Vagina (tissue), 2 donors: ENCODE measurements at regions of chr3 and their contacts with region 1.

Region 1: DNA sequence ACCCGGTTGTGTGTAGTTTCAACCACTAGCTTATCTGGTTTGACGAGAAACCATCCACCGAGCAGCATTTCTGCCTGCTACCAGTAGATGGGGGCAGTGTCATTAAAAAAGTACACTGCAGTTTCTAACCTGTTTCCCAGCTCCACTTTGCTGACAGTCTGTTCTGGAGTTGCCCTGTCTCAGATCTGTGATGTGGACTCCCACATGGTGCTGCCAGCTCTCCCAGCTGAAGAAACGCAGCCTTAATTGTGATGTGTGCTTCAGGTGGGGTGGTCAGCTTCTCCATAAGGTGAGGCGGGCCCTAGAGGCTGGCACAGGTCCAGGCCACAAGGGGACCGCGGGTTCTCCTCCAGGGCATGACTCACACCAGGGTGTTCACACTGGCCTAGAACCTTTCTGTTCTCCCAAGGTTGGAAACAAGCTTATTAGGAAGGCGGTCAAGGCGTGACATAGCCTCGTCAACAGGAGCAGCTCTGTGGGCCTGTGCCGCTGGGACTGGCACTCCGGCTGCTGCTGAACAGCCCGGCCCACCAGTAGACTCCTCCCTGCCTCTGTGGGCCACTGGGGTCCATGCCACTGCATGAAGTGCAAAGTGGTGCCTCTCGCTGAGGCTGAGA is 2.9 kb upstream of the FAM43A start:
- DNase-seq: peak in 1 of 2 donors; percentile 90
- H3K4me3 ChIP-seq: no peak overlapping the region
- H3K27ac ChIP-seq: peak overlapping the region; percentile 47
- H3K4me1 ChIP-seq: peaks cover 25% of the 10 kb centered on the region
- H3K27me3 ChIP-seq: no peaks in the 10 kb centered on the region
- CTCF ChIP-seq: peak; percentile 67 to 95 (median 82)
- POLR2A ChIP-seq: no peak

Region 2: DNA sequence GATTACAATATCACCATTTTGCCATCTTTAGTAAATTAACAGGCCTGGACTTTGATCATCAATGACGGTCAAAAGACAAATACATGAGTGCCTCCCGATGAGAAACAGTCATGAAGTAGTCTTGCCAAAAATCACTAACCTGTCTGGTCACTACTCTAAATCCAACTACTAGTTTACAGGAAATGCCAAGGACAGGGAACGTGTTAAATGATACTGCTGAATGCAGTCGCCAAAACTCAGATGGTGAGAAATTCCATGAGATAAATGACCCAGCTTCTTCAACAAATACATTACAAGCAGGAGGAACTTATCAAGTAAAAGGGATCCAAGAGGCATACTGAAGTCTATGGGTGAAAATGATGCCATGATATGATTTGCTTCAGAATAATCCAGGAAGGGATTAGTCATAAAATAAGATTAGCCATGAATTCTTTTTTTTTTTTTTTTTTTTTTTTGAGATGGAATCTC is 160.2 kb before region 1 on chr3:
- intact Hi-C with region 1: no loop called
- DNase-seq: no peak
- H3K4me3 ChIP-seq: no peak overlapping the region
- H3K27ac ChIP-seq: no peak overlapping the region
- H3K4me1 ChIP-seq: no peaks in the 10 kb centered on the region
- H3K27me3 ChIP-seq: no peaks in the 10 kb centered on the region
- CTCF ChIP-seq: no peak
- POLR2A ChIP-seq: no peak

Region 3: GRCh38 chr3:195035345-195036190 is 352.8 kb after region 1 on chr3:
- intact Hi-C with region 1: no loop called
- DNase-seq: no peak
- H3K4me3 ChIP-seq: no peak overlapping the region
- H3K27ac ChIP-seq: no peak overlapping the region
- H3K4me1 ChIP-seq: peaks cover 12% of the 10 kb centered on the region
- H3K27me3 ChIP-seq: no peaks in the 10 kb centered on the region
- CTCF ChIP-seq: no peak
- POLR2A ChIP-seq: no peak

Region 4: DNA sequence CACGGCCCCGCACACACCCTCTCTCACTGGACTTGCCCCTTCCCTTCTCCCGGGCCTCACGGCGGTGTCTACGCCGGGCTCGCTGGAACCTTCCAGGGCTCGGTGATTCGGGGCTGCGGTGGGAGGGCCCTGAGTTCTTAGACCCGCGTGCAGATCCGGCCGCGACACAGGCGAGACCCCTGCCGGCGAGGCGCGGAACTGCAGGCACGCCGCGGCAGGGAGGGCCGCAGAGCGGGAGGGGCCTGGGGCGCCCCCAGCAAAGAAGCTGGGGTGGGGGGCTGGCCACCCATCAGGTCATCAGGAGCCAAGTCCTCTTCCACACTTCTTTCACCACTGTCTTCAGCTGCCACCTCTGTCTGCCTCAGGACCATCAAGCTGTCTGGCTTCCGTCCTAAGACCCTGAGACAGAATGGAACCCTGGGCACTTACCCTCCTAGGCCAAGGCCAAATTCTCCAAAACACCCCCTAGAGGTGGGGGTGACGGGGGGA is 423.7 kb after region 1 on chr3:
- intact Hi-C with region 1: loop called (anchors 5 kb)
- DNase-seq: no peak
- H3K4me3 ChIP-seq: peak overlapping the region in 1 of 2 donors; percentile 25
- H3K27ac ChIP-seq: peak overlapping the region; percentile 8
- H3K4me1 ChIP-seq: peaks cover 36% of the 10 kb centered on the region
- H3K27me3 ChIP-seq: no peaks in the 10 kb centered on the region
- CTCF ChIP-seq: peak; percentile 97 to 99 (median 98)
- POLR2A ChIP-seq: no peak

Region 5: DNA sequence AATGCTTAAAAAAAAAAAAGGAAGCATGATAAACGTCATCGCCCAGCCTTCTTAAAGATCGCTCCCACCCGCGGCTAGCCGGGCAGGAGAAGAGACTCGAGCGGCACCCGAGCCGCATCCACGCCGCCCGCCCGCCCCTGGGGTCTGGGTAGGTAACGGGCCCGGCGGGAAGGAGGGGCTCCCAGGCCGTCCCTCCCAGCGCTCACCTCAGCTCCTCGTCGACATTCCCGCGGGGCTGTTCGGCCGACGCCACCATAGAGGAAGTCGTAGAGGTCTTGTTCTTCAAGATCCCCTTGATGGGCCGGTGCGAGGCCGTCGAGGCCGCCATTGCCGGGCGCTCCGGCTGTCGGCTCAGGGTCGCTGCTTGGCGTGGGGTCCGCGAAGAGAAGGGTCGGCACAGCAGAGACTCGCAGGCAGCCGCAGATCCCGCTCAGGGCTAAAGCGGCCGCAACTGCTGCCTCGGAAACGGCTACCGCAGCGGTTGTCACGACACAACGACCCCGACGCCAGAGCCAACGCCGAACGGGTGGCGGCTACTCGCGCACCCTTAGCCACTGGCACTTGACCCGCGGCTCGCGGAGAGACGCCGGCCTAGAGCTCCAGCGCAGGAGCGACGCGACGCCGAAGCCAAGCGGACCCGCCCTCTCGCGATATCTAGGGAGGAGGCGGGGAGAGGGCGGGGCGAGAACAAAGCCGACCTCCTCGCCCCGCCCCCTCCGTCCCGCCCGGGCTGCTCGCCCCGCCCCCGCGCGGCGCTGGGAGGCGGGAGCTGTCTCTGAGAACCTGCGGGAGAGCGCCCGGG is 860.1 kb after region 1 on chr3 and contains the start of gene PPP1R2:
- intact Hi-C with region 1: loop called (anchors 10 kb)
- DNase-seq: no peak
- H3K4me3 ChIP-seq: peak within 1 kb of the TSS; percentile 88 to 95
- H3K27ac ChIP-seq: peak within 1 kb of the TSS; percentile 86
- H3K4me1 ChIP-seq: peaks cover 56% of the 10 kb centered on the region
- H3K27me3 ChIP-seq: no peaks in the 10 kb centered on the region
- CTCF ChIP-seq: no peak
- POLR2A ChIP-seq: peak in 1 of 2 donors; percentile 93
- total RNA-seq, gene PPP1R2: 98.0 TPM

Region 6: DNA sequence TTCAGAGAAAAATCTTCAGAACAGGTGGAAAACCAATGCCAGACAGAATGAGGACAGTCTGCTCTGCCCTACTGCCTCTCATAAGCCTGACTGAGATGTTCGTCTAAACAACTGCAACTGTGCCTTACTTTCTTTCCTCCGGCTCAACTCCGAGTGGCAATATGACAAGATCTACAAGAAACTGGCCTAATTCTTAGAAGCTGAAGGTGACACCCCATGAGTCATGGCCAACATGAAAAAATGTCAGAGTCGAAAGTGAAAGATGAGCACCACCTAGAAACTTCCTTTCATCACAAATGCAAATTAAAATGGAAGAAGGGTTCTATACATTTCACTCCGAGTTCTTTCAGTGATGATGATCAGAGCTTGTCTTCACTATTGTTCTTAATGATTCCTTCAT is 1591.8 kb after region 1 on chr3:
- intact Hi-C with region 1: no loop called
- DNase-seq: no peak
- H3K4me3 ChIP-seq: no peak overlapping the region
- H3K27ac ChIP-seq: no peak overlapping the region
- H3K4me1 ChIP-seq: peaks cover 21% of the 10 kb centered on the region
- H3K27me3 ChIP-seq: no peaks in the 10 kb centered on the region
- CTCF ChIP-seq: no peak
- POLR2A ChIP-seq: no peak